Activated T-helper 1 cell treated with anti-CD3 and anti-CD28 coated beads, Interleukin-12 subunit alpha, Interleukin-12 subunit beta, Interleukin-2, Interleukin-4 antibody, amounts not matched to agents 30 ng/mL and 10 ng/mL and 1 ng/mL, durations not matched to agents 14 hours and 24 hours and 36 hours (primary cell): ENCODE measurements at regions of chr2 and their contacts with region 1.

Region 1: GRCh38 chr2:239369631-239370161 is 31.1 kb downstream of the HDAC4 start:
- DNase-seq: peak; percentile 83
- H3K4me3 Mint-ChIP-seq: no peak overlapping the region
- H3K27ac Mint-ChIP-seq: peak overlapping the region; percentile 92
- H3K4me1 Mint-ChIP-seq: peaks cover 26% of the 10 kb centered on the region
- H3K27me3 Mint-ChIP-seq: no peaks in the 10 kb centered on the region

Region 2: GRCh38 chr2:239199041-239199768 is 170.5 kb before region 1 on chr2:
- intact Hi-C with region 1: no loop called
- DNase-seq: no peak
- H3K4me3 Mint-ChIP-seq: no peak overlapping the region
- H3K27ac Mint-ChIP-seq: no peak overlapping the region
- H3K4me1 Mint-ChIP-seq: no peaks in the 10 kb centered on the region
- H3K27me3 Mint-ChIP-seq: no peaks in the 10 kb centered on the region

Region 3: GRCh38 chr2:239298116-239298804 is 71.4 kb before region 1 on chr2:
- intact Hi-C with region 1: loop called (anchors 1 kb)
- DNase-seq: peak; percentile 72
- H3K4me3 Mint-ChIP-seq: peak overlapping the region; percentile 84
- H3K27ac Mint-ChIP-seq: peak overlapping the region; percentile 91
- H3K4me1 Mint-ChIP-seq: peaks cover 71% of the 10 kb centered on the region
- H3K27me3 Mint-ChIP-seq: peaks cover 2% of the 10 kb centered on the region

Region 4: DNA sequence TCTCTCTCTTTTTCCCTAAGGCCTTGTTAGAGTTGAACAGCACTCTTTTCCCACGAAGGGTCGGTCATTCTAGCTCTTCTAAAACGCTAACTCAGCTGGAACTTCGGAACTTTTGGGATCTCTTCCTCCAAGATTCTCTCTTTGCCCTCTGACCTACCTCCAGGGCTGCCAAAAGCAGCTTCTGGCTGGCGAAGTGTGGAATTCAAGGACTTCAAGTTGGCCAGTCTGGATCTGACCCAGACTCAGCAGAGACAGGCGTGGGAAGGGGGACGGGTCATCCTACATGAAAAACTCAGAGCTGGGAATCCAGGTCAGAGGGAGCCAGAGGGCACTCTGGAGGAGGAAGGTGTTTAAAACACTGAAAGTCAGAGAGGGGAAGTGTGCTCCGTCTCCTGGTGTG is 336.7 kb after region 1 on chr2:
- intact Hi-C with region 1: no loop called
- DNase-seq: no peak
- H3K4me3 Mint-ChIP-seq: no peak overlapping the region
- H3K27ac Mint-ChIP-seq: no peak overlapping the region
- H3K4me1 Mint-ChIP-seq: no peaks in the 10 kb centered on the region
- H3K27me3 Mint-ChIP-seq: peaks cover 7% of the 10 kb centered on the region

Region 5: DNA sequence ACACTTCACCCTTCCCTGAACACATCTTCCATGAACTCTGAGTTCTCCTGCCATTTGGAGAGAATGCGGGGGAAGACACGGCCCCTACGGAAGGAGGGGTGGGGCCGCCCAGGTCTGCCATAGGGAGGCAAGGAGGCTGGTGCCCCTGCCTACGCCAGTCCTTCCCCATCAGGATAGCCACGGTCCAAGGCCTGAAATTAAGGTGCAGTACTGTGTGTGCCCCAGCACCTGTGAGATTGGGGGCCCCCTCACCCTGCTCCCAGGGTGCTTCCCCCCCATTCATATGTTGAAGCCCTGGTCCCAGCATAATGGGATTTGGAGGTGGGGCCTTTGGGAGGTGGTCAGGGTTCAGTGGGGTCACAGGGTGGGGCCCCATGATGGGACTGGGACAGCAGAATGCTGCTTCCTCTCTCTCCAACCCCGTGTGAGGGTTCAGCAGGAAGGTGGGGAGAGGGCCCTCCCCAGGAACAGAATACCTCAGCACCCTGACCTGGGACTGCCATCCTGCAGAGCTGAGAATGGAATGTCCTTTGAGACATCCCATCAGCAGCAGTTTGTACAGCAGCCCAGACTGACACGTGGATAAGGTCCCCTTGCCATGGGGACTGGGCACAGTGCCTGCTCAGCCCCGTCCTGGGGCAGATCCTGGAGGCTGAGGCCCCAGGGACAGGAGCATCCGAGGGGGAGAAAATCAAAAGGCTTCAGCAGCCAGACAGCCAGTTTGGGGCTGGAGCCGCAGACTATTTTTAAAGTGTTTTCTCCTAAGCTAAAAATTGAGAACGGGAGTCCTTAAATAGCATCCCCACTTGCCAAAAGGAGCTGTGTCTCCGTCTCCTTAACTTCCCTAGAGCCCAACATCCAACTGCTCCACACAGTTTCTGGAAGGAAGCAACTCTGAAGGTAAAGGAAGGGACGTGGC is 550.3 kb after region 1 on chr2:
- intact Hi-C with region 1: no loop called
- DNase-seq: no peak
- H3K4me3 Mint-ChIP-seq: no peak overlapping the region
- H3K27ac Mint-ChIP-seq: no peak overlapping the region
- H3K4me1 Mint-ChIP-seq: peaks cover 12% of the 10 kb centered on the region
- H3K27me3 Mint-ChIP-seq: peaks cover 5% of the 10 kb centered on the region